GM10248 (cell line): ENCODE measurements at regions of chr1 and their contacts with region 1.

Region 1: GRCh38 chr1:113226148-113226547 is 153.2 kb downstream of the LRIG2 start:
- DNase-seq: peak; percentile 46
- CTCF ChIP-seq: no peak

Region 2: GRCh38 chr1:113244112-113244820 is 18.1 kb after region 1 on chr1:
- CTCF ChIA-PET with region 1: no interaction called
- POLR2A ChIA-PET with region 1: no interaction called
- DNase-seq: no peak
- CTCF ChIP-seq: no peak

Region 3: GRCh38 chr1:113282893-113283285 is 56.7 kb after region 1 on chr1:
- CTCF ChIA-PET with region 1: no interaction called
- POLR2A ChIA-PET with region 1: no interaction called
- DNase-seq: no peak
- CTCF ChIP-seq: no peak

Region 4: GRCh38 chr1:114737314-114737849 is 1511.2 kb after region 1 on chr1:
- CTCF ChIA-PET with region 1: no interaction called
- POLR2A ChIA-PET with region 1: interaction called, 10 read pairs
- DNase-seq: no peak
- CTCF ChIP-seq: no peak